ENCODE measurements at regions of chr19 and their contacts with region 1.

Region 1: GRCh38 chr19:17305517-17306284 is at the start of gene MRPL34:
- DNase-seq: peak; percentile 70 to 99 (median 81)
- ATAC-seq: peak; percentile 65
- H3K4me3 ChIP-seq: peak within 1 kb of the TSS; percentile 58
- H3K27ac ChIP-seq: peak within 1 kb of the TSS; percentile 86
- H3K4me1 ChIP-seq: peaks cover 31 to 74% of the 10 kb centered on the region in 2 experiments; a peak in 4 of 5 replicates
- H3K27me3 ChIP-seq: no peaks in the 10 kb centered on the region
- CTCF ChIP-seq: peak; percentile 83 to 97 (median 93)
- EP300 ChIP-seq: peak; percentile 45; the same call in 1 of the 2 replicates
- POLR2A ChIP-seq: peak; percentile 87
- RAD21 ChIP-seq: peak; percentile 61 to 66
- polyA plus RNA-seq, gene MRPL34: 11.5 to 20.6 TPM

Region 2: DNA sequence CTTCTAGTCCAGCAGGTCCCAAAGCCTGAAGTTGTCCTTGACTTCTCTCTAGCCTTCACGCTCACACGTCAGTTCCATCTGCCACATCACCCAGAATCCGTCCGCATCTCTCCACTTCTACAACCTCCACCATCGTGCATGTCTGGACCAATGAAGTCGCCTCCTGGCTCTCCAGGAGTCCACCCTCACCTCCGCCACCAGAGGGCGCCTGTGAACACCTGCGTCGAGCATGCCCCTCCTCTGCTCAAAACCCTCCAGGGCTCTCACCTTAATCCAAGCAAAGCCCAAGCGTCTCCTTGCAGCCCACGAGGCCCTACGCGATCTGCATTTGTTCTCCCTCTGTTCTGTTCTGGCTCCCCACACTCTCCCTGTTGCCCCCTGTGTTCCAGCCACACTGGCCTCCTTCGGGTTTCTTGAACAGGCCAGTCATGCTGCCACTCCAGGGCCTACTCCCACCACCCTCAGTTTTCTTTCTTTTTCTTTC is 44.8 kb before region 1 on chr19:
- CTCF ChIA-PET with region 1: no interaction called
- POLR2A ChIA-PET with region 1: interaction called, 4 read pairs
- in situ Hi-C with region 1: no loop called
- intact Hi-C with region 1: loop called (anchors 2 kb)
- DNase-seq: peak; percentile 90 to 94 (median 90)
- ATAC-seq: peak; percentile 99
- H3K4me3 ChIP-seq: no peak overlapping the region
- H3K27ac ChIP-seq: peak overlapping the region; percentile 43; the same call in 2 of the 3 replicates
- H3K4me1 ChIP-seq: peaks cover 3 to 17% of the 10 kb centered on the region in 2 experiments; a peak in 3 of 5 replicates
- H3K27me3 ChIP-seq: no peaks in the 10 kb centered on the region
- CTCF ChIP-seq: peak; percentile 90 to 99 (median 94)
- EP300 ChIP-seq: 0 out of 2 replicates have a peak, but pooled peaks have one; percentile 19
- POLR2A ChIP-seq: 0 out of 2 replicates have a peak, but pooled peaks have one; percentile 37
- RAD21 ChIP-seq: peak; percentile 56 to 74

Region 3: GRCh38 chr19:17336872-17337722 is 31.4 kb after region 1 on chr19 and contains the start of gene GTPBP3:
- CTCF ChIA-PET with region 1: interaction called, 3 read pairs
- POLR2A ChIA-PET with region 1: interaction called, 78 read pairs
- in situ Hi-C with region 1: no loop called
- intact Hi-C with region 1: loop called (anchors 1 kb)
- DNase-seq: peak; percentile 91 to 100 (median 96)
- ATAC-seq: peak; percentile 82
- H3K4me3 ChIP-seq: peak within 1 kb of the TSS; percentile 84
- H3K27ac ChIP-seq: peak within 1 kb of the TSS; percentile 87
- H3K4me1 ChIP-seq: peaks cover 29 to 79% of the 10 kb centered on the region in 2 experiments; a peak in 4 of 5 replicates
- H3K27me3 ChIP-seq: no peaks in the 10 kb centered on the region
- CTCF ChIP-seq: peak in 1 of 3 experiments; percentile 9; a peak in 1 of 6 replicates
- EP300 ChIP-seq: peak; percentile 65
- POLR2A ChIP-seq: peak; percentile 92
- RAD21 ChIP-seq: no peak
- polyA plus RNA-seq, gene GTPBP3: 4.9 to 5.6 TPM

Measured in K562 (cell line).